Left ventricle myocardium superior (tissue), 1 donor: ENCODE measurements at regions of chr2 and their contacts with region 1.

Region 1: DNA sequence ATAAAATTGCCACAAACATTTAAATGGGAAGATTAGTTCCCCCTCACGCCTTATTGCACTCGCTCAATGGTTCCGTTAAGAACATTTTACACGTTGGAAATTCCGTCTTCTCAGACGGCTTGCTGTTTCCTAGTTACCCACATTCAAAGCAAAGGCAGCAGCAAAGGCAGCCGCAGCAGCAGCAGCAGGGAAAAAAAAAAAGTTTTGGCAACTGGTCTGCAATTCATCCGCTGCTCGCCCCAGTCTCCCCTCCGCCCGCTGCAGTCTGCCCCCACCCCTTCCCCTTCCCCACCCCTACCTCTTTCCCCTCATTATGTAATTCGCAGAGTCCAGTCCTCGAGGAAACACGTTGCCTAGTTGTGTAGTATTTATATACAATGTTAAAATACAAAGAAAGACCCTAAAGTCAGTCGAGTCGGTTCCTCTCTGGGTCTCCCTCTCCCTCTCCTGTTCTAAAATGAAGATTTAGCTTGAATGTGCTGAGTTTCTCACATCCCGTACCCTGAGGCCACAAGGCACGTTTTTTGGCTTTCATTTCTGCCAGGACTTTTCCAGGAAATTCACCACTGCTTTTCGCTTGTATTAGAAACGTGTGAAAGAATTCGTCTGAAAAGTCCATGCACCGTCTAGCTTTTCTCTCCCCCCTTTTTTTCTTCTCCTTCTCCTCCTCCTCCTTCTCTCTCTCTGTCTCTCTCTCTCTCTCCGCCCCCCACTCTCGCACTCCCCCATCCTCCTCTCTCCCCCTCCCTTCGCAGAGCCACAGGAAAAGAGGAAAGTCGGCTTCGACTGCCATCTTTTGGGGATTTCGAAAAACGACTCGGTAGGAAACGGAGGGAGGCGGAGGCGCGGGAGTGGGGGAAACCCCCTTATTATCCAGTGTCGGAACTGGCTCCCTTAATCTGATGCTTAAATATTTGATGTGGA is 140.0 kb downstream of the MEIS1 start:
- DNase-seq: peak; percentile 41
- ATAC-seq: peak; percentile 84

Region 2: DNA sequence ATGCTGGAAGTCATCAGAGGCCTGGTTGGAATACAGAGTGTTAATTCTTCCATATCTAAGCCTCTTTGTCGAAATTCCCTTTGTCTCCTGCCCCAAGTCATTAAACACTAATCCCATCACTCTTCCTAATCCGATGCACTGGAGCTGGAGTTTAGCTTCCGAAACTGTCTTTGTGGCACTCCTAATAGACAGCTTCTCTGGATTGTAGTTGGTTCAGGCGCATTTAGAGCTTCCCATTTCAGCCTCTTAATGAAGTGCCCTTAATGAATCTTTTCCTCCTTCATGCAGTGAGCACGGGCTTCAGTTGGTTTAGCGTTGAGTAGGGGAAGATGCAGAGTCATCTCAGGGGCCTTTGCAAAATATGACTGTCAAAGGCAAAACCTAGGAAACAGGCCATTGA is 212.3 kb before region 1 on chr2:
- intact Hi-C with region 1: no loop called
- DNase-seq: no peak
- ATAC-seq: no peak

Region 3: GRCh38 chr2:66389651-66390131 is 185.3 kb before region 1 on chr2:
- intact Hi-C with region 1: no loop called
- DNase-seq: no peak
- ATAC-seq: no peak

Region 4: GRCh38 chr2:66434679-66435548 is 140.0 kb before region 1 on chr2 and contains the start of gene MEIS1:
- intact Hi-C with region 1: loop called (anchors 5 kb)
- DNase-seq: peak; percentile 92
- ATAC-seq: peak; percentile 85
- total RNA-seq, gene MEIS1: 40.8 TPM

Region 5: GRCh38 chr2:67075530-67076238 is 500.7 kb after region 1 on chr2:
- intact Hi-C with region 1: no loop called
- DNase-seq: no peak
- ATAC-seq: no peak

Region 6: GRCh38 chr2:67290451-67291290 is 715.7 kb after region 1 on chr2:
- intact Hi-C with region 1: no loop called
- DNase-seq: no peak
- ATAC-seq: no peak